WTC11 (cell line): ENCODE measurements at regions of chr16 and their contacts with region 1.

Region 1: GRCh38 chr16:9134739-9135138 is 43.3 kb downstream of the HAPSTR1 start:
- DNase-seq: peak; percentile 80
- ATAC-seq: peak; percentile 84
- H3K4me3 Mint-ChIP-seq: no peak overlapping the region
- H3K27ac Mint-ChIP-seq: no peak overlapping the region
- H3K4me1 Mint-ChIP-seq: peaks cover 17% of the 10 kb centered on the region
- H3K27me3 Mint-ChIP-seq: no peaks in the 10 kb centered on the region
- CTCF ChIP-seq: peak; percentile 24; the same call in 1 of the 2 replicates

Region 2: GRCh38 chr16:9047686-9048301 is 86.9 kb before region 1 on chr16:
- CTCF ChIA-PET with region 1: interaction called, 15 read pairs
- POLR2A ChIA-PET with region 1: no interaction called
- DNase-seq: peak; percentile 24
- ATAC-seq: peak; percentile 80
- H3K4me3 Mint-ChIP-seq: no peak overlapping the region
- H3K27ac Mint-ChIP-seq: no peak overlapping the region; the same call in none of the 2 replicates
- H3K4me1 Mint-ChIP-seq: peaks cover 18% of the 10 kb centered on the region
- H3K27me3 Mint-ChIP-seq: no peaks in the 10 kb centered on the region
- CTCF ChIP-seq: no peak

Region 3: DNA sequence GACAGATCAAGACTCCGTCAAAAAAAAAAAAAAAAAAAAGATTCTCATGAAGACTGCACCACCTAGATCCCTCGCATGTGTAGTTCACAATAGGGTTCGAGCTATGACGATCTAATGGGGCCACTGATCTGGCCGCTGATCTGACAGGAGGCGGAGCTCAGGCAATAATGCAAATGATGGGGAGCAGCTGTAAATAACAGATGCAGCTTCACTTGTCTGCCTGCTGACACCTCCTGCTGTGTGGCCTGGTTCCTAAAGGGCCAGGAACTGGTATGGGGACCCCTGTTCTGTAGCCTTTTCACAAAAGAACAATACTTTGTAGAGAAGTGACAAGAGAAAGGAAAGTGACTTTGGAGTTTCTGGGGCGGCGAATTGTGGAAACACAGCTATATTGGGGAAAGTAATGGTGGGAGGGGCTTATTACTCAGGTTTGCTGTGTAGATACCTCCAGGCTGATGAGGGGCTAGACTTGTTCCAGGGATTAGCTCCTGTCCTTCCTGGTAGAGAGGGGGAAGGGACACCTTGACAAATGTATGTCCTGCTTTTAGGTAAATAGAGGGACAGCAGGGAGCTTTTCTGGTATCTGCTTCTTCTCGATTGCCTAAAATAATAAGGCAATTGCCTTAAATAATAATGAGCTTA is 13.8 kb after region 1 on chr16:
- CTCF ChIA-PET with region 1: interaction called, 40 read pairs
- POLR2A ChIA-PET with region 1: no interaction called
- DNase-seq: peak; percentile 57
- ATAC-seq: peak; percentile 34
- H3K4me3 Mint-ChIP-seq: peak overlapping the region; percentile 24
- H3K27ac Mint-ChIP-seq: peak overlapping the region; percentile 55; the same call in 1 of the 2 replicates
- H3K4me1 Mint-ChIP-seq: peaks cover 59% of the 10 kb centered on the region
- H3K27me3 Mint-ChIP-seq: no peaks in the 10 kb centered on the region
- CTCF ChIP-seq: no peak

Region 4: DNA sequence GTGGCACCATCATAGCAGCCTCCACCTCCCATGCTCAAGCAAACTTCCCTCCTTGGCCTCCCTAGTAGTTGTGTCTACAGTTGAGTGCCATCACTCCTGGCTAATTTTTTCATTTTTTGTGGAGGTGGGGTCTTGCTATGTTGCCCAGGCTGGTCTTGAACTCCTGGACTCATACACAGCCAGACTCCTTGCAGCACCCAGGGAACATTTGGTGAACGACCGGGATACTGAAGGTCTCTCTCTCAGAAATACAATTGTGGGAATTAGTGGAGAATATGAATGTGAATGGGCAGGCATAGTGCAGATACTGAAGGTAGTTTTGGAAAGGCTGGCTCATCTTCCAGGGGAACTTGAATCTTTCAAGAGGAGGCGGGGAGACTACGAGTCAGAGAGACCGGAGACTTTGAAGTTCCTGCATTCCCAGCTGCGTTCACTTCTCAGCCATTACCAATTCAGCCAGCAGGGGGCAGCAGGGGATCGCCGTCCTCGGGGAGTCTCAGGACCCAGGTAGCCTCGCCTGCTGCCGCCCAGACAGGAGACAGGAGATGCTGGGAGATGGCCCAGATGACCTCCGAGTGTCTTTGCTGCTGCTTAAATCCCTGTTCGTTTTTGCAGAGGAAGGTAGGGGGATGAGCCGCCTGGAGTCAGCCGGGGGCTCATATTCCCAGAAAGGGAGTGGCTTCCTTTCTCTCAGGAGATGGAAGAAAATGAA is 25.3 kb after region 1 on chr16:
- CTCF ChIA-PET with region 1: interaction called, 13 read pairs
- POLR2A ChIA-PET with region 1: no interaction called
- DNase-seq: peak; percentile 87
- ATAC-seq: peak; percentile 87
- H3K4me3 Mint-ChIP-seq: 0 out of 2 replicates have a peak overlapping the region, but pooled peaks have one; percentile 28
- H3K27ac Mint-ChIP-seq: no peak overlapping the region
- H3K4me1 Mint-ChIP-seq: peaks cover 30% of the 10 kb centered on the region
- H3K27me3 Mint-ChIP-seq: no peaks in the 10 kb centered on the region; the same call in 1 of the 2 replicates
- CTCF ChIP-seq: peak; percentile 44

Region 5: DNA sequence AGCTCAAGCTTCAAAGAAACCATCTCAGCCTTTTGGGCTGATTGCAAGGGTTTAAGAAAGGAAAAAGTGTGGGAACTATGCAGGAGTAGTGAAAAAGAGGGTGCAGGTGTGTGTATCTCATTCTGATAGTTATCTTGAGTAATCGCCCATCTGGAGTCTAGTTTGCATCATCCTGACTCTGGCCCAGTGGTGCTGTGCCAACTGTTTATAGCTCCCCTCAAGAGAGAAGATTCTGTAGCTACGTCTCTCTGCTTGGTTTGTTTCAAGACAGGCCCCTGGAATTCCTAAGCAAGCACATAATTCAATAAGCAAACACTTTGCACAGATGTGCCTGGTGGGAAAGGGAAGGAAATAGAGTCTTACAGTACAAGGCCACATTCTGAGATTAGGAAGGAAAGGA is 101.1 kb after region 1 on chr16:
- CTCF ChIA-PET with region 1: interaction called, 10 read pairs
- POLR2A ChIA-PET with region 1: no interaction called
- DNase-seq: no peak
- ATAC-seq: no peak
- H3K4me3 Mint-ChIP-seq: no peak overlapping the region
- H3K27ac Mint-ChIP-seq: no peak overlapping the region
- H3K4me1 Mint-ChIP-seq: peaks cover 10% of the 10 kb centered on the region
- H3K27me3 Mint-ChIP-seq: no peaks in the 10 kb centered on the region; the same call in 1 of the 2 replicates
- CTCF ChIP-seq: no peak

Region 6: GRCh38 chr16:9378876-9379275 is 244.1 kb after region 1 on chr16:
- CTCF ChIA-PET with region 1: no interaction called
- POLR2A ChIA-PET with region 1: no interaction called
- DNase-seq: no peak
- ATAC-seq: no peak
- H3K4me3 Mint-ChIP-seq: no peak overlapping the region
- H3K27ac Mint-ChIP-seq: no peak overlapping the region
- H3K4me1 Mint-ChIP-seq: peaks cover 9% of the 10 kb centered on the region
- H3K27me3 Mint-ChIP-seq: no peaks in the 10 kb centered on the region
- CTCF ChIP-seq: no peak